MCF 10A (cell line): ENCODE measurements at regions of chr1 and their contacts with region 1.

Region 1: DNA sequence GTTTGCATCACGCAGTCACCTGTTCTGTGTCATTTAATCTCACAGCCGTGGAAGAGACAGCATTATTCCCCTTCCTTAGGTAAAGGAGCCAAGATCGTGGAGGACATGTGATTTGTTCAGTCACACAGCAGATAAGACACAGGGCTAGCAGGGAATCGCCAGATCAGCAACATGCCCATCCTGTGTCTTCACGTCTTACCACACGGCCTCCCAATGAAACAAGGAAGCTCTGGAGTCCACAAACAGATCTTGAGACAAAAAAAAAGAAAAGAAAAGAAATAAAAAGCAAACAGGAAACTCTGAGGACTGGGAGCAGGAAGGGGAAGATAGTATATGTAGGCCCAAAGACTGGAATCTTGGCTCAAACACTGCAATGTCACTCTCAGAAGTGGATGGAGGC is 155.3 kb downstream of the ADSS2 start:
- DNase-seq: no peak
- H3K4me3 Mint-ChIP-seq: no peak overlapping the region
- H3K27ac Mint-ChIP-seq: peak overlapping the region; percentile 36
- H3K4me1 Mint-ChIP-seq: peaks cover 8% of the 10 kb centered on the region
- H3K27me3 Mint-ChIP-seq: no peaks in the 10 kb centered on the region
- CTCF ChIP-seq: no peak

Region 2: DNA sequence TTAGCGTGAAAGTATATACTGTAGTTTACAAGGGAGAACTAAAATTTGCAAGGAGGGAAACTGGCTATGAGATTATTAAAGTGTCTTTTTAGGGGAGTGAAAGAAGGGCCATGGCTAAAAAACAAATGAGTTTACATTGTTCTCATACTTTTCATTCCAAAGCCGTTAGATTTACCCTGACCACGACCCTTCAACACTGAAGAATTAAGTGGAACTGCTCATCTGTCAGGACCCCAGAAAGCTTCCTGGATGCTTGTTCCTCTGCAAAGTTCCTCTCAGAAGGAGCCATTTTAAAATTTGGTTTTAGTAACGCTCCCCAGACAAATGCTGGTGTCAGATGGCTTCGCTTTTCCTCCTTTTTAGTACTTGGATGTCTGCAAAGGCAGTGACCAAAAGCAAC is 328.0 kb before region 1 on chr1:
- CTCF ChIA-PET with region 1: no interaction called
- POLR2A ChIA-PET with region 1: no interaction called
- intact Hi-C with region 1: no loop called
- DNase-seq: no peak
- H3K4me3 Mint-ChIP-seq: no peak overlapping the region
- H3K27ac Mint-ChIP-seq: no peak overlapping the region
- H3K4me1 Mint-ChIP-seq: no peaks in the 10 kb centered on the region
- H3K27me3 Mint-ChIP-seq: peaks cover 31% of the 10 kb centered on the region
- CTCF ChIP-seq: no peak

Region 3: DNA sequence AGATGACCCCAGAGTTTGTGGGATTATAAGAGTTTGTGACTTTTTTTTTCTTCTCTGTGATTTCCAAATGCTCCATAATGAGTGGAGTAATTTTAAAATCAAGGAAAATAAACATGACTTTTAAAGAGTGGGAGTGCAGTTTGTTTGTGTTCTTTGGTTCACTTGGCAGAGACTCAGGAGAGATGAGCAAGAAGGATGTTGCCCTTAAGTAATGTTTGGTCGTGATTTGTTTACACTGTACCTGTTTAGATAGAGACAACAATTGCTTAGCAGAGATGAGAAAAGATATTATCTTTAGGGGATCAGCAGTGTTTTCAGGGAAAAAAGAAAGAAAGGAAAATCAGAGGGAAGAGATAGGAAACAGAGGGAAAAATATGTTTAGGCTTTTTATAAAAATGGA is 15.6 kb before region 1 on chr1:
- CTCF ChIA-PET with region 1: interaction called, 119 read pairs
- POLR2A ChIA-PET with region 1: interaction called, 7 read pairs
- intact Hi-C with region 1: loop called (anchors 1 kb)
- DNase-seq: peak; percentile 90
- H3K4me3 Mint-ChIP-seq: no peak overlapping the region
- H3K27ac Mint-ChIP-seq: peak overlapping the region; percentile 28
- H3K4me1 Mint-ChIP-seq: peaks cover 21% of the 10 kb centered on the region
- H3K27me3 Mint-ChIP-seq: no peaks in the 10 kb centered on the region
- CTCF ChIP-seq: no peak

Region 4: GRCh38 chr1:244353551-244354091 is 57.2 kb after region 1 on chr1:
- CTCF ChIA-PET with region 1: interaction called, 6 read pairs
- POLR2A ChIA-PET with region 1: no interaction called
- intact Hi-C with region 1: loop called (anchors 2 kb)
- DNase-seq: peak; percentile 99
- H3K4me3 Mint-ChIP-seq: no peak overlapping the region
- H3K27ac Mint-ChIP-seq: peak overlapping the region; percentile 97
- H3K4me1 Mint-ChIP-seq: peaks cover 43% of the 10 kb centered on the region
- H3K27me3 Mint-ChIP-seq: no peaks in the 10 kb centered on the region
- CTCF ChIP-seq: no peak